Ascending aorta (tissue), 2 donors: ENCODE measurements at regions of chr3 and their contacts with region 1.

Region 1: GRCh38 chr3:132730891-132731580 is 8.8 kb upstream of the NPHP3 start:
- DNase-seq: no peak
- H3K4me3 ChIP-seq: no peak overlapping the region
- H3K27ac ChIP-seq: no peak overlapping the region
- H3K4me1 ChIP-seq: no peaks in the 10 kb centered on the region
- H3K27me3 ChIP-seq: no peaks in the 10 kb centered on the region
- CTCF ChIP-seq: peak in 2 of 3 experiments; percentile 43 to 59

Region 2: DNA sequence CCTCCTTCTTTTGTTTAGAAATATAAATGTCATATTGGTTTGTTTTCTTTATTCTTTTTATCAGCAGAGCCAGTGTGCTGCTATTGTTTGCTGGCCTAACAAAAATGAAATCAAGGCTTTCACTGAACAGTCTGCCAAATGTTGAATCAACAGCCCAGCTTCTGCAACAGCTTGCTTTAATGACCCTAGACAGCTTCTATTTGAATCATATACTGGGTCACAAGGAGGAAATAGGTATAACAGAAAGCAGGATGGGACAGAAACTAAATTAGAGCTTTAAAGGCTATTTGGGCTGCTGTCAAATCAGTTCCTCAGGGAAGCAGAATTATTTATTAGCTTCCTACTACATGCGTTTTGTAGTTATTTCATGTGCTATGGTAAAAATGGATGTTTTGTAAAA is 325.8 kb before region 1 on chr3:
- intact Hi-C with region 1: no loop called
- DNase-seq: no peak
- H3K4me3 ChIP-seq: no peak overlapping the region
- H3K27ac ChIP-seq: no peak overlapping the region
- H3K4me1 ChIP-seq: no peaks in the 10 kb centered on the region
- H3K27me3 ChIP-seq: no peaks in the 10 kb centered on the region
- CTCF ChIP-seq: no peak

Region 3: GRCh38 chr3:132695422-132695821 is 35.6 kb before region 1 on chr3:
- intact Hi-C with region 1: no loop called
- DNase-seq: no peak
- H3K4me3 ChIP-seq: no peak overlapping the region
- H3K27ac ChIP-seq: no peak overlapping the region
- H3K4me1 ChIP-seq: no peaks in the 10 kb centered on the region
- H3K27me3 ChIP-seq: no peaks in the 10 kb centered on the region
- CTCF ChIP-seq: no peak

Region 4: GRCh38 chr3:133384331-133385027 is 653.4 kb after region 1 on chr3:
- intact Hi-C with region 1: loop called (anchors 5 kb)
- DNase-seq: peak in 1 of 2 donors; percentile 66
- H3K4me3 ChIP-seq: no peak overlapping the region
- H3K27ac ChIP-seq: no peak overlapping the region
- H3K4me1 ChIP-seq: no peaks in the 10 kb centered on the region
- H3K27me3 ChIP-seq: no peaks in the 10 kb centered on the region
- CTCF ChIP-seq: peak; percentile 19 to 58 (median 50)

Region 5: GRCh38 chr3:133426721-133427120 is 695.7 kb after region 1 on chr3:
- intact Hi-C with region 1: loop called (anchors 2 kb)
- DNase-seq: no peak
- H3K4me3 ChIP-seq: no peak overlapping the region
- H3K27ac ChIP-seq: no peak overlapping the region
- H3K4me1 ChIP-seq: peaks cover 0 to 3% of the 10 kb centered on the region in 2 donors
- H3K27me3 ChIP-seq: no peaks in the 10 kb centered on the region
- CTCF ChIP-seq: no peak

Region 6: DNA sequence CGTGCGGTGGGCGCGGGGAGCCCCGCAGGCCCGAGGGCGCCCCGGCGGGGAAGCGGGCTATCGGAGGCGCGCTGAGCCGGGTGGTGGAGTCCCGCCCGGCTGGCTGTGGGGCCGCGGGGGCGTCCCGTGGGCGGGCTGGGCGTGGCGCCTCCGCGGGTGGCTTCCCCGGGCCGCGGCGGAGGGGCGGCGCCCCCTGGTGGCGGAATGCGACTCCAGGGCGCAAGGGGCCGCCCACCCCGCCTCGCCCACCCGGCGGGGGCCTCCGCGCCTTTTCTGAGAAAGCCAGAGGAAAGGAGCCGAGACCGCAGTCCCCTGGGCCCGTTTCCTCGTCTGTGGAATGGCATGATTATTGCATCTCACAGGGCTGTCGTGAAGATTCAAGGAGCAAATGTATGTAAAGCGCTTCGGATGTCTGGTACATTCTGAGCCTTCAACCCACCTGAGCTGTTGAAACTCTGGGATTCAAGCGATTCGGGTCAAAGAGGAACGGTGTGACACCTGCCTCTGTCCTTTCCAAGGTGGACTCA is 1196.6 kb after region 1 on chr3:
- intact Hi-C with region 1: loop called (anchors 5 kb)
- DNase-seq: peak in 1 of 2 donors; percentile 72
- H3K4me3 ChIP-seq: peak overlapping the region; percentile 55 to 80
- H3K27ac ChIP-seq: no peak overlapping the region
- H3K4me1 ChIP-seq: peaks cover 0 to 4% of the 10 kb centered on the region in 2 donors
- H3K27me3 ChIP-seq: no peaks in the 10 kb centered on the region
- CTCF ChIP-seq: peak; percentile 55 to 76 (median 60)